Psoas muscle (tissue), 8 donors: ENCODE measurements at regions of chr6 and their contacts with region 1.

Region 1: GRCh38 chr6:57089687-57090460 is at the start of gene ZNF451:
- DNase-seq: peak; percentile 98 to 99
- ATAC-seq: peak; percentile 98 to 99 (median 98)
- H3K4me3 ChIP-seq: peak within 1 kb of the TSS; percentile 69
- H3K27ac ChIP-seq: peak within 1 kb of the TSS; percentile 84
- H3K4me1 ChIP-seq: peaks cover 31% of the 10 kb centered on the region
- H3K27me3 ChIP-seq: no peaks in the 10 kb centered on the region
- CTCF ChIP-seq: no peak
- total RNA-seq, gene ZNF451: 20.4 to 27.6 (median 23.7) TPM

Region 2: DNA sequence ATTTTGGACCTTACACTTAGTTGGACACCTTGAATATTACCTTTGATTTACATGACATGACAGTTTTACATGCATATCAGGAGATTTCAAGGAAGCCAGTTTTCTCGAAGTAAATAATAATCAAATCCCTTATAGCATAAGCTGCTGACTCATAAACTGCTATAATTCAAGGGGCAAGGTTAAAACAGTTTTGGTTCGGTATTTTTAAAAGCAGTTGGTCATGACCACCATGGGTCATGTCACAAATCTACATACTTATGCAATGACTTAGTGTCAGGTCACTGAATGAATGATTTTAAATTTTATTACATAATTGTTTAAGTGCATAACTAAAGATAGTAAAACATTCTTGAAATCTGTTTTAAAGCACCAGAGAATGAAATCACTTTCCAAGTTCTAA is 605.2 kb before region 1 on chr6:
- intact Hi-C with region 1: no loop called
- DNase-seq: no peak
- ATAC-seq: no peak
- H3K4me3 ChIP-seq: no peak overlapping the region
- H3K27ac ChIP-seq: no peak overlapping the region
- H3K4me1 ChIP-seq: no peaks in the 10 kb centered on the region
- H3K27me3 ChIP-seq: no peaks in the 10 kb centered on the region
- CTCF ChIP-seq: no peak

Region 3: GRCh38 chr6:56965126-56965525 is 124.7 kb before region 1 on chr6:
- intact Hi-C with region 1: no loop called
- DNase-seq: no peak
- ATAC-seq: no peak
- H3K4me3 ChIP-seq: no peak overlapping the region
- H3K27ac ChIP-seq: no peak overlapping the region
- H3K4me1 ChIP-seq: no peaks in the 10 kb centered on the region
- H3K27me3 ChIP-seq: no peaks in the 10 kb centered on the region
- CTCF ChIP-seq: no peak

Region 4: GRCh38 chr6:57048577-57048976 is 41.3 kb before region 1 on chr6:
- intact Hi-C with region 1: loop called in 1 of 2 experiments (anchors 5 kb)
- DNase-seq: no peak
- ATAC-seq: no peak
- H3K4me3 ChIP-seq: no peak overlapping the region
- H3K27ac ChIP-seq: no peak overlapping the region
- H3K4me1 ChIP-seq: peaks cover 3% of the 10 kb centered on the region
- H3K27me3 ChIP-seq: no peaks in the 10 kb centered on the region
- CTCF ChIP-seq: no peak

Region 5: GRCh38 chr6:57158658-57159057 is 68.8 kb after region 1 on chr6:
- intact Hi-C with region 1: loop called in 1 of 2 experiments (anchors 10 kb)
- DNase-seq: no peak
- ATAC-seq: no peak
- H3K4me3 ChIP-seq: no peak overlapping the region
- H3K27ac ChIP-seq: no peak overlapping the region
- H3K4me1 ChIP-seq: no peaks in the 10 kb centered on the region
- H3K27me3 ChIP-seq: no peaks in the 10 kb centered on the region
- CTCF ChIP-seq: no peak